K562 (cell line): ENCODE measurements at regions of chr19 and their contacts with region 1.

Region 1: DNA sequence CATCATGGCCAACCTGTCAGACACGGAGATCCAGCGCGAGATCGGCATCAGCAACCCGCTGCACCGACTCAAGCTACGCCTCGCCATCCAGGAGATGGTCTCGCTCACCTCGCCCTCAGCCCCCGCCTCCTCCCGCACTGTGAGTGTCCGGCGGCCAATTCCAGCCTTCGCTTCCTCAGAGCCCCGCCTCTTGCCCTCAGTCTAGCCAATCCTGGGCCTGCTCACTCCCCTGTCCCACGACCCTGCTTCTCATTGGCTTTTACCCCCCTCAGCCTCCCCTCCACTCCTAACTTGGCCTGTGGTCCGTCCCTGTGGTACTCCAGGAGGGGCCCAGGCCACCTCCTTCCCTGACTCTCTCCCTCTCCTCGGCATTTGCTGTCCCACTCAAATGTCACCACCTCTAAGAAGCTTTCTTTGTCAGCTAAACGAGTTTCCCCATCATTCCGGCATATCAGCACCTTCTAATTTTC is 12.3 kb downstream of the HRC start:
- DNase-seq: peak; percentile 77 to 97 (median 86)
- ATAC-seq: peak; percentile 97
- H3K4me3 ChIP-seq: peak overlapping the region; percentile 46
- H3K27ac ChIP-seq: peak overlapping the region; percentile 43; the same call in 1 of the 3 replicates
- H3K4me1 ChIP-seq: peaks cover 14 to 44% of the 10 kb centered on the region in 2 experiments; a peak in 4 of 5 replicates
- H3K27me3 ChIP-seq: no peaks in the 10 kb centered on the region
- CTCF ChIP-seq: no peak
- EP300 ChIP-seq: no peak
- POLR2A ChIP-seq: peak; percentile 52
- RAD21 ChIP-seq: no peak

Region 2: GRCh38 chr19:49127674-49128544 is 15.0 kb before region 1 on chr19:
- CTCF ChIA-PET with region 1: no interaction called
- POLR2A ChIA-PET with region 1: interaction called, 7 read pairs
- in situ Hi-C with region 1: no loop called
- intact Hi-C with region 1: loop called (anchors 2 kb)
- DNase-seq: peak; percentile 95 to 97 (median 96)
- ATAC-seq: peak; percentile 97
- H3K4me3 ChIP-seq: peak overlapping the region; percentile 55
- H3K27ac ChIP-seq: peak overlapping the region; percentile 74
- H3K4me1 ChIP-seq: peaks cover 19 to 48% of the 10 kb centered on the region in 2 experiments
- H3K27me3 ChIP-seq: no peaks in the 10 kb centered on the region
- CTCF ChIP-seq: peak; percentile 18 to 58 (median 50); a peak in 4 of 6 replicates
- EP300 ChIP-seq: no peak
- POLR2A ChIP-seq: peak; percentile 36; the same call in 1 of the 2 replicates
- RAD21 ChIP-seq: peak in 1 of 2 experiments; percentile 43; a peak in 2 of 4 replicates

Region 3: DNA sequence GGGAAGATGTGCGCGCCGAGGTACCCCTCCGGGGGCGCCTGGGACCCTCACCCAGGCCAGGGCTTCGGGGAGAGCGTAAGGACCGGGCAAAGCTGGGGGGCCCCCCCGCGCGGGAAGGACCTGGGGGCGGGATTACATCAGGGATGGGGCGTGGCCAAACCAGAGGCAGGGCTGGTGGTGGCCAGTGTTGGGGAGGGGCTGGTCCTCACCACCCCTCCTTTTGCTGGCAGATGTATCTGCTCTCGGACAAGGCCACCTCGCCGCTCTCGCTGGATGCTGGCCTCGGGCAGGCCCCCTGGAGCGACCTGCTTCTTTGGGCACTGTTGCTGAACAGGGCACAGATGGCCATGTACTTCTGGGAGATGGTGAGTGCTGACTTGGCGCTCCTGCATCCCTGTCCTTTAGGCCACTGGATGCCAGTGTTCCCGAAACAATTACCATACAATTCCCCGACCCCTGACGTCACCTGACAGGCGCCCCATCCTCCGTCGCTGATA is 40.0 kb after region 1 on chr19:
- CTCF ChIA-PET with region 1: no interaction called
- POLR2A ChIA-PET with region 1: no interaction called
- in situ Hi-C with region 1: no loop called
- intact Hi-C with region 1: no loop called
- DNase-seq: peak in 3 of 4 experiments; percentile 11 to 17 (median 12)
- ATAC-seq: peak; percentile 59; the same call in 2 of the 3 replicates
- H3K4me3 ChIP-seq: no peak overlapping the region
- H3K27ac ChIP-seq: no peak overlapping the region
- H3K4me1 ChIP-seq: no peaks in the 10 kb centered on the region; a peak in 1 of 5 replicates
- H3K27me3 ChIP-seq: no peaks in the 10 kb centered on the region
- CTCF ChIP-seq: no peak
- EP300 ChIP-seq: no peak
- POLR2A ChIP-seq: no peak
- RAD21 ChIP-seq: no peak

Region 4: DNA sequence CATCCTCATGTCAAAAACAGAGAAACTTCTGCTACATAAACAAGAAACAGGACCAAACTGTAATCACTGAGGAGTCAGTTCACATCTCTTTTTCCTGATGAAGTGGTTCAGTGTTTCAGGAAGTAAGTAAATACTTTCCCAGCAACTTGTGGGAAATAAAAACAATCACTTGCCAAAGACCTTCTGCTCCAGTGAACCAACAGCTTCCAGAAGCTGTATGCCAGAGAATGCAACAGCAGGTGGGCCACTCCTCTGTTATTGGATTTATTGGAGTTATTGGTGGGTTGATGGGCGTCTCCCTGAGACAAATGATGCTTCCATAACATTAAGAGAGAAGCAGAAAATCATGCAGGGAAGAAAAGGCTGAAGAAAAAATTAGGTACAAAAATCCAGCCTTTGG is 172.2 kb after region 1 on chr19:
- CTCF ChIA-PET with region 1: no interaction called
- POLR2A ChIA-PET with region 1: no interaction called
- in situ Hi-C with region 1: no loop called
- intact Hi-C with region 1: no loop called
- DNase-seq: no peak
- ATAC-seq: no peak
- H3K4me3 ChIP-seq: no peak overlapping the region
- H3K27ac ChIP-seq: no peak overlapping the region
- H3K4me1 ChIP-seq: no peaks in the 10 kb centered on the region
- H3K27me3 ChIP-seq: no peaks in the 10 kb centered on the region
- CTCF ChIP-seq: no peak
- EP300 ChIP-seq: no peak
- POLR2A ChIP-seq: no peak
- RAD21 ChIP-seq: no peak

Region 5: GRCh38 chr19:49624967-49625910 is 482.3 kb after region 1 on chr19:
- CTCF ChIA-PET with region 1: no interaction called
- POLR2A ChIA-PET with region 1: no interaction called
- in situ Hi-C with region 1: no loop called
- intact Hi-C with region 1: no loop called
- DNase-seq: no peak
- ATAC-seq: peak; percentile 53; the same call in 2 of the 3 replicates
- H3K4me3 ChIP-seq: no peak overlapping the region
- H3K27ac ChIP-seq: no peak overlapping the region
- H3K4me1 ChIP-seq: peaks cover 0 to 13% of the 10 kb centered on the region in 2 experiments; a peak in 2 of 5 replicates
- H3K27me3 ChIP-seq: no peaks in the 10 kb centered on the region
- CTCF ChIP-seq: no peak
- EP300 ChIP-seq: no peak
- POLR2A ChIP-seq: no peak
- RAD21 ChIP-seq: no peak